ENCODE measurements at regions of chr13 and their contacts with region 1.

Region 1: GRCh38 chr13:109786457-109787134 is at the start of gene IRS2:
- DNase-seq: peak; percentile 95
- H3K4me3 Mint-ChIP-seq: peak within 1 kb of the TSS; percentile 75
- H3K27ac Mint-ChIP-seq: peak within 1 kb of the TSS; percentile 56
- H3K4me1 Mint-ChIP-seq: peaks cover 17% of the 10 kb centered on the region
- H3K27me3 Mint-ChIP-seq: peaks cover 7% of the 10 kb centered on the region
- total RNA-seq, gene IRS2: 2.3 to 2.5 TPM

Region 2: DNA sequence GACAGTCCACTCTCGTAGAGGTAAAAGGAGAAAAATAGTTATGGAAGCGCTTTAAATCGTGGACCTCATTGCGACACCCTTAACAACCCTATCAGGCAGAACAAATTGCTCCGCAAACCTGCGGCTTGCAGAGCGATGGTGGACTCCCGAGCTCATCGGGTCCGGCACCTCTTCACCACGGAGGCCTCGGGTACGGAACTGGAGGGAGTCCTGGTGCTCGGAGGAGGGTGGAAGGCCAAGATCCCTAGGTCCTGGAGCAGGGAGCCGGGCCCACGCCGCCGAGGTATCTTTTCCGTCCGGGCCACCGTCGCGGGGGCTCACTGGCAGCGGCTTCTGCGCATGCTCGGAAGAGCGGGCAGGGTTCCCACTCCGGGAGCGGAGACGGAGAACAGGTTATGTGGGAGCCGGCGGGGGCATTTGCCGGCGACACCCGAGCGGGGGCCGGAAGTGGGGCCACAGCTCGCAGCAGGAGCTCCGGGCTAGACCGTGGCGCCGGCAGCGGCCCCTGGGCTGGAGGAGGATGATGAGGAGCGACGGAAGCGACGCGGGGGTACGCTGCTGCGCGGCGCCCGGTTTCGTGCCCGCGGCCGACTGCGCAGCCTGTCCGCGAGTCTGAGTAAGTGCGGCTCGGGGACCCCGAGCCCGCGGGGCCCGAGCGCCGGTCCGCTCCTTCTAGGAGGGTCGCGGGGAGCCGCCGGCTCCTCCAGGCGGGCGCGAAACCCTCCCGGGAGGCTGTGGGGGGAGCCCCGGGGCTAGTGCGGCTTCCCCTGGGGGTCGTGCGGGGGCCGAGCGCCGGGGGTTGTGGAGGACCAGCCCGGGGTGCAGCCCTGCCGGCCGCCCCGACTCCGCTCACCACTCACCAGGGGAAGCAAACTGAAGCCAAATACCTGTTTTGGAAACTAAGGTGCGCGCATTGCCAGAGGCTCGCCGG is 1568.3 kb before region 1 on chr13 and contains the start of gene ABHD13:
- CTCF ChIA-PET with region 1: no interaction called
- POLR2A ChIA-PET with region 1: no interaction called
- intact Hi-C with region 1: loop called (anchors 5 kb)
- DNase-seq: peak; percentile 93
- H3K4me3 Mint-ChIP-seq: peak within 1 kb of the TSS; percentile 89
- H3K27ac Mint-ChIP-seq: peak within 1 kb of the TSS; percentile 92
- H3K4me1 Mint-ChIP-seq: peaks cover 47% of the 10 kb centered on the region
- H3K27me3 Mint-ChIP-seq: no peaks in the 10 kb centered on the region
- total RNA-seq, gene ABHD13: 5.1 to 5.2 TPM

Region 3: GRCh38 chr13:108961542-108962125 is 825.0 kb before region 1 on chr13:
- CTCF ChIA-PET with region 1: interaction called, 6 read pairs
- POLR2A ChIA-PET with region 1: no interaction called
- intact Hi-C with region 1: loop called (anchors 1 kb)
- DNase-seq: no peak
- H3K4me3 Mint-ChIP-seq: no peak overlapping the region
- H3K27ac Mint-ChIP-seq: no peak overlapping the region
- H3K4me1 Mint-ChIP-seq: peaks cover 2% of the 10 kb centered on the region
- H3K27me3 Mint-ChIP-seq: no peaks in the 10 kb centered on the region

Region 4: DNA sequence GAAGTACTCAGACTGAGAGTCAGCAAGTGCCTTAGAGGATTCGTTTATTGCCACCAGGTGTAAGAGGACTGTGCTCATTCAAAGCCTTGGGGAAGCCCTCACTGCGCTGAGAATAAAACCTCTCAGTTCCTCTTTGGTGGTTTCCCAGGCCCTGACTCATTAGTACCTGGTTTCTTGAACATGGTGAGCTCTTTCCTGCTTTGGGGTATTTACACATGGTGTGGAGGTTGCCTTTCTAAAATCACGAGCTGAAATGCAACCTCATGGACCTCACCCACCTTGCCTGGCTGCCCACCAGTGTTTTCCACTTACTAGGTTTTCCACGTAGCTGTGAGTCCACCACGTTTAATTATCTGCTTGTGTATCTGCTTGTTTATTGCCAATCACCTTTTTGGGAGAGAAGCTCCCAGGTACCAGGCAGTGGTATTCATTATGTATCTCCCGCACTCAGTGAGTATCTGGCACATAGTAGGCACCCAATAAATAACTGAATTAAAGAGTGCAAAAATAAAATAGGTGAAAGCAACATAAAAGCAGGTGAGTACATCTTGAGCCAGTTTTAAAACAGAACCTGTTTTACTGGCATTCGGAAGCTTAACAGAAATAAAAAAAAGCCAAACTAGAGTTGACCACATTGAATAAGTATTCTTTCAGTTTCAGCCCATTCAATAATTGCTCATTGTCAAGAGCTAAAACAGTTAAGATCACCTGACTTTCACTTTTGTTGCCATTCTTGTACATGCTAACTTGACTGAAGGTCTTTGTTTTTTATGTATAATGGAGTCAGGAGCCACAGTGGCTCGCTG is 624.1 kb before region 1 on chr13:
- CTCF ChIA-PET with region 1: no interaction called
- POLR2A ChIA-PET with region 1: no interaction called
- intact Hi-C with region 1: loop called (anchors 5 kb)
- DNase-seq: peak; percentile 70
- H3K4me3 Mint-ChIP-seq: no peak overlapping the region
- H3K27ac Mint-ChIP-seq: no peak overlapping the region
- H3K4me1 Mint-ChIP-seq: peaks cover 8% of the 10 kb centered on the region
- H3K27me3 Mint-ChIP-seq: peaks cover 1% of the 10 kb centered on the region

Region 5: GRCh38 chr13:109610517-109610916 is 176.1 kb before region 1 on chr13:
- CTCF ChIA-PET with region 1: interaction called, 6 read pairs
- POLR2A ChIA-PET with region 1: interaction called, 4 read pairs
- intact Hi-C with region 1: loop called (anchors 1 kb)
- DNase-seq: peak; percentile 46
- H3K4me3 Mint-ChIP-seq: no peak overlapping the region
- H3K27ac Mint-ChIP-seq: no peak overlapping the region
- H3K4me1 Mint-ChIP-seq: no peaks in the 10 kb centered on the region
- H3K27me3 Mint-ChIP-seq: peaks cover 6% of the 10 kb centered on the region

Region 6: GRCh38 chr13:110138010-110138699 is 351.6 kb after region 1 on chr13:
- CTCF ChIA-PET with region 1: no interaction called
- POLR2A ChIA-PET with region 1: no interaction called
- intact Hi-C with region 1: loop called (anchors 1 kb)
- DNase-seq: peak; percentile 86
- H3K4me3 Mint-ChIP-seq: peak overlapping the region; percentile 65
- H3K27ac Mint-ChIP-seq: peak overlapping the region; percentile 71
- H3K4me1 Mint-ChIP-seq: peaks cover 10% of the 10 kb centered on the region
- H3K27me3 Mint-ChIP-seq: peaks cover 41% of the 10 kb centered on the region

Region 7: DNA sequence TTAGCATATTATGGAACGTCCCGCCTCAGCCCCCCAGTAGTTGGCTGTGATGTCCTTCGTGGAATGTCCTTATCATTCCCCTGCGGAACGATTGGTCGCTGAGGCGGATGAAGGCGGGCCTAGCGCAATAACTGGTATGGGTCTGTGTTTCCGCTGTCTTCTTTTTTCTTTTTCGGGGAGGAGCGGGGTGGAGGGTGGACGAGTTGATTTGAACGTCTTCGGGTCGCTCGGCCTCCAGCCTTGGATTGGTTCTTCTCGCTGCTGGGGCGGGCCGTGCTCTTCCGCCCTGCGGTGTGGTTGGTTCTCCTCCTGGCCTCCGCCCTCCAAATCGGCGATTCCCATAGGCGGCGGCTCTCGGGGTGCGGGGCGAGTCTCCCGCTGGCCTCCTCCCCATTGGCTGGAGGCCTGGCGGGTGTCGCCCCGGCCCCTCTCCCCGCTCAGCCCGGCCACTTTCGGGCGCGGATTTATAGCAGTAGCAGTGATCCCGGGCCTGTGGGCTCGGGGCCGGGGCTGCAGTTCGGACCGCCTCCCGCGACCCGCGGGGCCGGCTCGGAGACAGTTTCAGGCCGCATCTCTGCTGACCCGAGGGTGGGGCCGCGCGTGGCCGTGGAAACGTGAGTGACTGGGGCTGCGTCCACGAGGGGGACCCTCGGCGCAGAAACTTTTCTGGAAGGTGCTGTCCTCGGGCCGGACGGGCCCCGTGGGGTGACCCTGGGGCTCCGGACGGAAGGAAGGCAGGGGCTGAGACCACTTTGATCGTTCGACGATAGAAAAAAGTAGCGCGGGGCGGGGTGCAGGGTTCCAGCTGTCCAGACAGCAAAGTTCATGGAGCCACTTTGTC is 929.0 kb after region 1 on chr13:
- CTCF ChIA-PET with region 1: no interaction called
- POLR2A ChIA-PET with region 1: no interaction called
- intact Hi-C with region 1: loop called (anchors 2 kb)
- DNase-seq: peak; percentile 97
- H3K4me3 Mint-ChIP-seq: peak overlapping the region; percentile 96
- H3K27ac Mint-ChIP-seq: peak overlapping the region; percentile 98
- H3K4me1 Mint-ChIP-seq: peaks cover 33% of the 10 kb centered on the region
- H3K27me3 Mint-ChIP-seq: no peaks in the 10 kb centered on the region

Measured in activated CD4-positive, alpha-beta memory T cell treated with anti-CD3 and anti-CD28 coated beads for 36 hours (primary cell).